H1 (cell line): ENCODE measurements at regions of chr11 and their contacts with region 1.

Region 1: GRCh38 chr11:123020968-123021367 is 39.3 kb upstream of the BSX start:
- DNase-seq: no peak
- H3K4me3 ChIP-seq: no peak overlapping the region
- H3K27ac ChIP-seq: no peak overlapping the region
- H3K4me1 ChIP-seq: no peaks in the 10 kb centered on the region
- H3K27me3 ChIP-seq: no peaks in the 10 kb centered on the region; a peak in 1 of 7 replicates
- CTCF ChIP-seq: peak; percentile 48 to 84 (median 81)
- EP300 ChIP-seq: no peak
- POLR2A ChIP-seq: no peak
- RAD21 ChIP-seq: peak; percentile 86

Region 2: DNA sequence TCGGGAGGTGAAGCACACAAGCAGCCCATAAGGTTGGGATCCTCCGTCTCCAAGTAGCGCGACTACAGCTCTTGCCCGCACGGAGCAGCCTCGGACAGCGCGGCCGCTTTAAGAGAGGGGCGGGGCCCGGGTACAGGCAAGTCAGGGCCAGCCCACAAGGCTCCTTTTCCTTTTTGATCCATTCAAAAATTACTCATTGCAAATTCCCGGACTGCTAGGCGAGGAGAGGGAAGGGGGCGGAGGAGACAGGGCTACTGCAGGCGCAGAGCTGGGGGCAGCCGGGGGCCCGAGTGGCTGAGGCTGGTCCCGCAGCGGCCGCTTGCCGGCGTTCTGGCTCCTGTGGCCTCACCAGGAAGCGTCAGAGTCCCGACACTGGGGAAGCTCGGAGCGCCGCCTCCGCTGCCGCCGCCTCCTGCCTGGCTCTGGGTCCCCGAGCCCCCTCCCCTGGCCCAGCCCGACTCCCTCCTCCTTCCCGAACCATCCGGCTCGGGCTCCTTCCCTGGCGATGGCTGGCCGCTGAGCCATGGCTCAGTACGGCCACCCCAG is 365.4 kb before region 1 on chr11 and contains the start of gene UBASH3B:
- CTCF ChIA-PET with region 1: no interaction called
- POLR2A ChIA-PET with region 1: no interaction called
- DNase-seq: peak in 1 of 2 experiments; percentile 81
- H3K4me3 ChIP-seq: peak within 1 kb of the TSS; percentile 70 to 88 (median 72)
- H3K27ac ChIP-seq: no peak within 1 kb of the TSS
- H3K4me1 ChIP-seq: peaks cover 0 to 10% (median 3%) of the 10 kb centered on the region in 4 experiments; a peak in 6 of 7 replicates
- H3K27me3 ChIP-seq: peaks cover 0 to 21% (median 13%) of the 10 kb centered on the region in 4 experiments; a peak in 6 of 7 replicates
- CTCF ChIP-seq: 0 out of 4 replicates have a peak, but pooled peaks of 1 of the 3 experiments have one; percentile 10
- EP300 ChIP-seq: no peak
- POLR2A ChIP-seq: no peak
- RAD21 ChIP-seq: peak in 1 of 2 experiments; percentile 19; a peak in 1 of 4 replicates
- total RNA-seq, gene UBASH3B: 8.9 and 9.5 TPM in 2 replicates

Region 3: DNA sequence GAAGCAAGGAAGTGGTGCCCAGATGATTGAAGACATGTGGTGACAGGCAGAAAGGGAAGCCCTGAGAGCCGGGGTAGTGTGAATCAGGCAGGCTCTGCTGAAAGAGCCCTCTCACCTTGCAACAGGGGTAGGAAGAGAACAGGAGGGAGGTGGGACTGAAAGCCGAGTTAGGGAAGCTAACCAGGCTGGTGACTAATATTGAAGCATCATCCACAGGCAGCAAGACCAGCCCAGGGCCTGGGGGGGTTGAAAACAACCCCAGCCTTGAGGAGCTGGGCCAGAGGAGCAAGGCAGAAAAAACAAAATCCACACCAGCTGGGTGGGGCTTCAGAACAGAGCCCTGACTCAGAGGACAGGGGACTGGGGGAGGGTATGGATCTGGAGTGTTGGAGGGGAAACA is 217.7 kb before region 1 on chr11:
- CTCF ChIA-PET with region 1: no interaction called
- POLR2A ChIA-PET with region 1: no interaction called
- DNase-seq: no peak
- H3K4me3 ChIP-seq: no peak overlapping the region
- H3K27ac ChIP-seq: no peak overlapping the region
- H3K4me1 ChIP-seq: peaks cover 0 to 3% (median 0%) of the 10 kb centered on the region in 4 experiments; a peak in 4 of 7 replicates
- H3K27me3 ChIP-seq: no peaks in the 10 kb centered on the region
- CTCF ChIP-seq: no peak
- EP300 ChIP-seq: no peak
- POLR2A ChIP-seq: no peak
- RAD21 ChIP-seq: no peak

Region 4: DNA sequence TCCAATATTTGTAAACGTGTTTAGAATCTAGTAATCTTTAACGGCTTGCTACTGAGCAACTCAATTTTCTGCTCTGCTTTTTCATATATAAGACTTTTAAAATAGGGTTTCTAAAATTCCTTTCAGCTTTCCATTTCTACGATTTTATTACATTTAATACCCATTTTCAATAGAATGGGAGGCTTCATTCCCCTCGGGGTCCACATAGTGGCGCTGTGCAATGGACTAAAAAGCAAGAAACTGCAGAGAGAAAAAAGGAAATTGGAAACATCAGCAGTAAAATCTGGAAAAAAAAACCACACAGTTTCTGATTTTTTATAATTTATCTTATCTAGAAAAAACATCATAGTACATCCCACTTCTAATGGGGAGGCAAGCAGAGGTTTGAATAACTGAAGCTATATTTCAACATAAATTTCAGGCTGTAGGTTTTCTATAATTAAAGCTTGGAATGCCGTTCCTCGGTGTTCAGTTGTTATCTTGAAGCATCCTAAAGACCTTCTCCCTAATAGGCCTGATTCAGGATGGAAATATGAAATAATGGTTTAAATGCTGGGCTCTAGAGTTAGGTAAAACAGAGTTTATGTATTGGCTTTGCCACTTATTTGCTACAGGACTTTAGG is 157.2 kb before region 1 on chr11:
- CTCF ChIA-PET with region 1: interaction called, 95 read pairs
- POLR2A ChIA-PET with region 1: no interaction called
- DNase-seq: no peak
- H3K4me3 ChIP-seq: no peak overlapping the region
- H3K27ac ChIP-seq: no peak overlapping the region
- H3K4me1 ChIP-seq: no peaks in the 10 kb centered on the region
- H3K27me3 ChIP-seq: no peaks in the 10 kb centered on the region
- CTCF ChIP-seq: peak in 2 of 3 experiments; percentile 61 to 73; a peak in 3 of 4 replicates
- EP300 ChIP-seq: no peak
- POLR2A ChIP-seq: no peak
- RAD21 ChIP-seq: peak; percentile 80 to 82

Region 5: GRCh38 chr11:122882857-122883645 is 137.9 kb before region 1 on chr11:
- CTCF ChIA-PET with region 1: interaction called, 16 read pairs
- POLR2A ChIA-PET with region 1: no interaction called
- DNase-seq: peak in 1 of 2 experiments; percentile 78
- H3K4me3 ChIP-seq: peak overlapping the region; percentile 66 to 81 (median 68)
- H3K27ac ChIP-seq: no peak overlapping the region
- H3K4me1 ChIP-seq: peaks cover 0 to 11% (median 5%) of the 10 kb centered on the region in 4 experiments; a peak in 5 of 7 replicates
- H3K27me3 ChIP-seq: peaks cover 0 to 13% (median 10%) of the 10 kb centered on the region in 4 experiments; a peak in 5 of 7 replicates
- CTCF ChIP-seq: no peak
- EP300 ChIP-seq: no peak
- POLR2A ChIP-seq: peak in 1 of 2 experiments; percentile 28; a peak in 1 of 3 replicates
- RAD21 ChIP-seq: no peak

Region 6: GRCh38 chr11:122917311-122917710 is 103.7 kb before region 1 on chr11:
- CTCF ChIA-PET with region 1: interaction called, 30 read pairs
- POLR2A ChIA-PET with region 1: interaction called, 3 read pairs
- DNase-seq: no peak
- H3K4me3 ChIP-seq: no peak overlapping the region
- H3K27ac ChIP-seq: no peak overlapping the region
- H3K4me1 ChIP-seq: peaks cover 0 to 5% (median 2%) of the 10 kb centered on the region in 4 experiments; a peak in 1 of 7 replicates
- H3K27me3 ChIP-seq: no peaks in the 10 kb centered on the region
- CTCF ChIP-seq: no peak
- EP300 ChIP-seq: no peak
- POLR2A ChIP-seq: no peak
- RAD21 ChIP-seq: no peak

Region 7: GRCh38 chr11:122998727-122999366 is 22.1 kb before region 1 on chr11:
- CTCF ChIA-PET with region 1: interaction called, 98 read pairs
- POLR2A ChIA-PET with region 1: no interaction called
- DNase-seq: peak in 1 of 2 experiments; percentile 33
- H3K4me3 ChIP-seq: no peak overlapping the region
- H3K27ac ChIP-seq: no peak overlapping the region
- H3K4me1 ChIP-seq: peaks cover 0 to 7% (median 4%) of the 10 kb centered on the region in 4 experiments; a peak in 2 of 7 replicates
- H3K27me3 ChIP-seq: no peaks in the 10 kb centered on the region
- CTCF ChIP-seq: no peak
- EP300 ChIP-seq: no peak
- POLR2A ChIP-seq: no peak
- RAD21 ChIP-seq: no peak

Region 8: DNA sequence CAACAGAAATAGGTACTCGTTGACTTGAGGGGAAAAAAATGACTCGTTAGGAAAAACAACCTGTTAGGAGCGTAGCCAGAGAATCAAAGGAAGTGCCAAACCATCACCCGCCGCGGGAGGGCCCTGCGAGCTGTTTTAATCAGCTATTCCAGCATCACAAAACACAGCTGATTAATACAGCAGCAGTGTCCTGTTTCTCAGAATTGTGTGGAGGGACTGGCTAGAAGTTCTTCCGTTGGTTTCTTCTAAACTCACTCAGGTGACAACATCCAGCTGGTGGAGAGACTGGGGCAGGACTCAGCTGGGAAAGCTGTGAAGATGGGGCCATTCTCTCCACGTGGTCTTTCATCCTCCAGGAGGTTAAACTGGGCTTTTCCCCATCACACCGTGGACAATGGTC is 12.9 kb after region 1 on chr11:
- CTCF ChIA-PET with region 1: interaction called, 42 read pairs
- POLR2A ChIA-PET with region 1: interaction called, 3 read pairs
- DNase-seq: no peak
- H3K4me3 ChIP-seq: no peak overlapping the region
- H3K27ac ChIP-seq: no peak overlapping the region
- H3K4me1 ChIP-seq: peaks cover 0 to 3% (median 1%) of the 10 kb centered on the region in 4 experiments; a peak in 4 of 7 replicates
- H3K27me3 ChIP-seq: no peaks in the 10 kb centered on the region
- CTCF ChIP-seq: no peak
- EP300 ChIP-seq: no peak
- POLR2A ChIP-seq: no peak
- RAD21 ChIP-seq: peak in 1 of 2 experiments; percentile 14; a peak in 1 of 4 replicates

Region 9: DNA sequence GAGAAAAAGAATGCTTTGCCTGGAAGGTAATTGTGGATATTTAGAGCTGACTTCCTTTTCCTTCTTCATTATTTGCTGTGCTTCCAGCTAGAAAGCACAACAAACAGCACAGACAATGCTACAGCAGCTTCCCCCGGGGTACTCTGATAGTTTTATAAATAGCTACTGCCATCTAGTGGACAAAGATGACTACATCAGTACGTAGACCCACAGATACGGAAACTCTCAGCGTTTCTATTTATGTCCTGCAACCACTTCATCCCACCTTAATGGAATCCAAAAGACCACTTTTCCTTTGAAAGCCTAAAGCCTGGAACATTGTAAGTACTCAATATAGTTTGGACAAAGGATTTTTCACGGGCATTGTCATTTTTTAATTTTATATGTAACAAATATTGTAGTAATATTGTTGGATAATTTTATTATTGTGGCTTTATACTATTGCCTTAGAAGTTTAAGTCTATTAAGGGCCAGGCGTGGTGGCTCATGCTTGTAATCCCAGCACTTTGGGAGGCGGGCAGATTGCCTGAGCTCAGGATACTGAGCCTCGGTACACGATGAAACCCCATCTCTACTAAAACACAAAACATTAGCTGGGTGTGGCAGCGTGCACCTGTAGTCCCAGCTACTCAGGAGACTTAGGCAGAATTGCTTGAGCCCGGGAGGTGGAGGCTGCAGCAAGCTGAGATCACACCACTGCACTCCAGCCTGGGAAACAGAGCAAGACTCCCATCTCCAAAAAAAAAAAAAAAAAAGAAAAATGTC is 33.5 kb after region 1 on chr11:
- CTCF ChIA-PET with region 1: interaction called, 58 read pairs
- POLR2A ChIA-PET with region 1: no interaction called
- DNase-seq: no peak
- H3K4me3 ChIP-seq: no peak overlapping the region
- H3K27ac ChIP-seq: no peak overlapping the region
- H3K4me1 ChIP-seq: peaks cover 0 to 5% (median 2%) of the 10 kb centered on the region in 4 experiments; a peak in 4 of 7 replicates
- H3K27me3 ChIP-seq: no peaks in the 10 kb centered on the region
- CTCF ChIP-seq: peak in 2 of 3 experiments; percentile 66 to 68; a peak in 3 of 4 replicates
- EP300 ChIP-seq: no peak
- POLR2A ChIP-seq: peak in 1 of 2 experiments; percentile 18; a peak in 1 of 3 replicates
- RAD21 ChIP-seq: peak; percentile 70 to 80

Region 10: GRCh38 chr11:123174196-123175183 is 153.5 kb after region 1 on chr11:
- CTCF ChIA-PET with region 1: no interaction called
- POLR2A ChIA-PET with region 1: no interaction called
- DNase-seq: no peak
- H3K4me3 ChIP-seq: no peak overlapping the region
- H3K27ac ChIP-seq: no peak overlapping the region
- H3K4me1 ChIP-seq: peaks cover 0 to 10% (median 6%) of the 10 kb centered on the region in 4 experiments; a peak in 4 of 7 replicates
- H3K27me3 ChIP-seq: no peaks in the 10 kb centered on the region
- CTCF ChIP-seq: no peak
- EP300 ChIP-seq: no peak
- POLR2A ChIP-seq: no peak
- RAD21 ChIP-seq: no peak